ENCODE measurements at regions of chr1 and their contacts with region 1.

Region 1: GRCh38 chr1:160291248-160292220 is 6.6 kb upstream of the PEX19 start:
- DNase-seq: peak; percentile 84
- ATAC-seq: peak; percentile 97
- H3K4me3 ChIP-seq: no peak overlapping the region
- H3K4me3 Mint-ChIP-seq: no peak overlapping the region
- H3K27ac ChIP-seq: peak overlapping the region in 1 of 2 donors; percentile 24
- H3K27ac Mint-ChIP-seq: peak overlapping the region; percentile 8
- H3K4me1 ChIP-seq: no peaks in the 10 kb centered on the region
- H3K4me1 Mint-ChIP-seq: peaks cover 3% of the 10 kb centered on the region
- H3K27me3 ChIP-seq: no peaks in the 10 kb centered on the region
- H3K27me3 Mint-ChIP-seq: no peaks in the 10 kb centered on the region
- CTCF ChIP-seq: peak; percentile 87

Region 2: DNA sequence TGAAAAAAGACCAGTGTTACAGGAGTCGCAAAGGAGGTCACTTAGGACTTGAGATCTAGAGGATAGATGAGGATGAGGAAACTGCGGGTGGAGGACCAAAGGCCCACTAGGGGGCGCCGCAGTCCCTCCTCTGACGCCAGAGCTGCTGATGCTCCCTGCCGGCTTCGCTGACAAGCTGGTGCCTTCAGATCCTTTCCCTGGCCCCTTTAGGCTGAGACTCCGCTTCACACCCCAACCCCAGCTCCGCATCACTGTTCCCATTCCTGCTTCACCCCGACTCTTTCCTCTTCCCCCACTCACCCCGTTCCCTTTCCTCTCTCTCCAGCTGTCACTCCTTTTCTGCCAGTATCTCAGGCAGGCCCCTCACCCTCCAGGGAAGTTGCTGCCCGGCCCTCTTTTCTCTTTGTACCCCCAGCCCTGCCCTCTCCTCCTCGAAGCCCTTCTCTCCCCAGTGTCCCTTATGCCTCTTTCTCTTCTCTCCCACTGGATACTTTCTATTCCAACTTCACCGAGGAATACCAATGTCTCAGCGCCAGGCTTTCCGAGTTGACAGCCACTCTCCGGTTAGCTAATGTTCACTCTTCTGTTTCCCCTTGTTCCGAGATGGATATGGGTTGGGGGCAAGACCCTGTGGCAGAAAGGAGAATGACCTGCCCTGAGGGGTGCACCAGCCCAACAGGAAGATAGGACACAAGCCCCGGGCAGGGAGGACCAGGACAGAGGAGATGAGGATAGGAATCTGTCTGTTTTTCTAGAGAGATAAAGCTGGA is 205.7 kb before region 1 on chr1:
- CTCF ChIA-PET with region 1: interaction called, 24 read pairs
- POLR2A ChIA-PET with region 1: no interaction called
- intact Hi-C with region 1: no loop called
- DNase-seq: peak; percentile 79
- ATAC-seq: peak; percentile 58
- H3K4me3 ChIP-seq: no peak overlapping the region
- H3K4me3 Mint-ChIP-seq: peak overlapping the region; percentile 26
- H3K27ac ChIP-seq: no peak overlapping the region
- H3K27ac Mint-ChIP-seq: peak overlapping the region; percentile 21
- H3K4me1 ChIP-seq: peaks cover 6 to 9% of the 10 kb centered on the region in 2 donors
- H3K4me1 Mint-ChIP-seq: peaks cover 12% of the 10 kb centered on the region
- H3K27me3 ChIP-seq: peaks cover 0 to 25% (median 18%) of the 10 kb centered on the region in 4 experiments
- H3K27me3 Mint-ChIP-seq: peaks cover 20% of the 10 kb centered on the region
- CTCF ChIP-seq: peak; percentile 85

Region 3: GRCh38 chr1:160205242-160206035 is 86.1 kb before region 1 on chr1 and contains the start of gene PEA15:
- CTCF ChIA-PET with region 1: interaction called, 40 read pairs
- POLR2A ChIA-PET with region 1: no interaction called
- intact Hi-C with region 1: no loop called
- DNase-seq: peak; percentile 77
- ATAC-seq: peak; percentile 57
- H3K4me3 ChIP-seq: peak within 1 kb of the TSS; percentile 44 to 99 (median 92)
- H3K4me3 Mint-ChIP-seq: peak within 1 kb of the TSS; percentile 88
- H3K27ac ChIP-seq: peak within 1 kb of the TSS; percentile 98 to 99
- H3K27ac Mint-ChIP-seq: peak within 1 kb of the TSS; percentile 90
- H3K4me1 ChIP-seq: peaks cover 26 to 35% of the 10 kb centered on the region in 2 donors
- H3K4me1 Mint-ChIP-seq: peaks cover 66% of the 10 kb centered on the region
- H3K27me3 ChIP-seq: no peaks in the 10 kb centered on the region
- H3K27me3 Mint-ChIP-seq: no peaks in the 10 kb centered on the region
- CTCF ChIP-seq: no peak
- total RNA-seq, gene PEA15: 76.7 and 81.7 TPM in 2 replicates

Region 4: GRCh38 chr1:160261893-160262794 is 29.4 kb before region 1 on chr1 and contains the start of gene DCAF8:
- CTCF ChIA-PET with region 1: interaction called, 33 read pairs
- POLR2A ChIA-PET with region 1: interaction called, 3 read pairs
- intact Hi-C with region 1: no loop called
- DNase-seq: peak; percentile 98
- ATAC-seq: peak; percentile 92
- H3K4me3 ChIP-seq: peak within 1 kb of the TSS; percentile 96 to 100 (median 99)
- H3K4me3 Mint-ChIP-seq: peak within 1 kb of the TSS; percentile 100
- H3K27ac ChIP-seq: peak within 1 kb of the TSS; percentile 96 to 97
- H3K27ac Mint-ChIP-seq: peak within 1 kb of the TSS; percentile 92
- H3K4me1 ChIP-seq: peaks cover 20 to 22% of the 10 kb centered on the region in 2 donors
- H3K4me1 Mint-ChIP-seq: peaks cover 41% of the 10 kb centered on the region
- H3K27me3 ChIP-seq: no peaks in the 10 kb centered on the region
- H3K27me3 Mint-ChIP-seq: no peaks in the 10 kb centered on the region
- CTCF ChIP-seq: no peak
- total RNA-seq, gene DCAF8: 247 and 266 TPM in 2 replicates

Region 5: GRCh38 chr1:160277330-160277729 is 14.2 kb before region 1 on chr1:
- CTCF ChIA-PET with region 1: interaction called, 32 read pairs
- POLR2A ChIA-PET with region 1: no interaction called
- intact Hi-C with region 1: no loop called
- DNase-seq: no peak
- ATAC-seq: no peak
- H3K4me3 ChIP-seq: no peak overlapping the region
- H3K4me3 Mint-ChIP-seq: no peak overlapping the region
- H3K27ac ChIP-seq: no peak overlapping the region
- H3K27ac Mint-ChIP-seq: no peak overlapping the region
- H3K4me1 ChIP-seq: no peaks in the 10 kb centered on the region
- H3K4me1 Mint-ChIP-seq: no peaks in the 10 kb centered on the region
- H3K27me3 ChIP-seq: no peaks in the 10 kb centered on the region
- H3K27me3 Mint-ChIP-seq: no peaks in the 10 kb centered on the region
- CTCF ChIP-seq: no peak

Region 6: GRCh38 chr1:160328184-160328583 is 36.6 kb after region 1 on chr1:
- CTCF ChIA-PET with region 1: interaction called, 18 read pairs
- POLR2A ChIA-PET with region 1: no interaction called
- intact Hi-C with region 1: no loop called
- DNase-seq: no peak
- ATAC-seq: no peak
- H3K4me3 ChIP-seq: no peak overlapping the region
- H3K4me3 Mint-ChIP-seq: no peak overlapping the region
- H3K27ac ChIP-seq: no peak overlapping the region
- H3K27ac Mint-ChIP-seq: no peak overlapping the region
- H3K4me1 ChIP-seq: no peaks in the 10 kb centered on the region
- H3K4me1 Mint-ChIP-seq: no peaks in the 10 kb centered on the region
- H3K27me3 ChIP-seq: no peaks in the 10 kb centered on the region
- H3K27me3 Mint-ChIP-seq: no peaks in the 10 kb centered on the region
- CTCF ChIP-seq: no peak

Region 7: GRCh38 chr1:160376525-160377131 is 85.1 kb after region 1 on chr1:
- CTCF ChIA-PET with region 1: interaction called, 72 read pairs
- POLR2A ChIA-PET with region 1: no interaction called
- intact Hi-C with region 1: loop called (anchors 2 kb)
- DNase-seq: peak; percentile 76
- ATAC-seq: peak; percentile 67
- H3K4me3 ChIP-seq: peak overlapping the region in 1 of 5 experiments; percentile 21
- H3K4me3 Mint-ChIP-seq: peak overlapping the region; percentile 70
- H3K27ac ChIP-seq: no peak overlapping the region
- H3K27ac Mint-ChIP-seq: peak overlapping the region; percentile 60
- H3K4me1 ChIP-seq: peaks cover 19 to 23% of the 10 kb centered on the region in 2 donors
- H3K4me1 Mint-ChIP-seq: peaks cover 24% of the 10 kb centered on the region
- H3K27me3 ChIP-seq: no peaks in the 10 kb centered on the region
- H3K27me3 Mint-ChIP-seq: no peaks in the 10 kb centered on the region
- CTCF ChIP-seq: peak; percentile 83

Measured in B cell (primary cell).